GM12878 (cell line): ENCODE measurements at regions of chr17 and their contacts with region 1.

Region 1: DNA sequence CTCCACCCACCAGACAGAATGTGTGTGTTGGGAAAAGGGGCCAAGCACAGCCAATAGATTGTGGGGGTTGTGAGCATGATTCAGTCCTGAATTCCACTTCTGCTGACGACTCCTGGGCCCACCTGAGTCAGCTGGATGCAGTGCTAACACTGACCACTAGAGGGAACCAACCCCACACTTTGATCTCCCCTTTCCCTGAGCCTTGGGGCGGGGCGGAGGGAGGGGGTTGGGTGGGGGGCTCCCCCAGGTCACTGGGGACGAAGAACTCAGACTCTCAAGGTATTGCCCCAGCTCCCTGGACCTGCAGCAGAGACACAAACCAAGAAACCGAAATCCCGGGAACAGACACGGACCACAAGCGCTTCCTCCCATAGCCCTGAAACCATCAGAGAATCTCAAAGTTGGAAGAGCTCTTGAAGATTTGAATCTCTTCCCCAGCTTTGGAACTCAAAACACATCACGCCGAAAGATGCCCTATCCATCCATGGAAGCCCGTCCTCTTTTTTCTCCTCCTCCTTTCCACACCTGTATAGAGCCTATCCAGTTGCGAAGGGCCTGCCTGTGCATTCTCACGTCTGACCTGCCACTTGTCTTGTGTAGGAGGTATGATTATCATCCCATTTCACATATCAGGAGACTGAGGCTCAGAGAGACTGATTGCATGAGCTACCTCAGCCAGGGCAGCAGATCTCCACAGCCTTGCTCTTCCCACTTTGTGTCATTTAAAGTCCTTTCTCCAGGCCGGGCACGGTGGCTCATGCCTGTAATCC is 784 bp upstream of the CSHL1 start:
- DNase-seq: no peak
- ATAC-seq: peak; percentile 78
- H3K4me3 ChIP-seq: no peak overlapping the region
- H3K27ac ChIP-seq: no peak overlapping the region
- H3K4me1 ChIP-seq: peaks cover 5% of the 10 kb centered on the region
- H3K27me3 ChIP-seq: peaks cover 0 to 2% of the 10 kb centered on the region in 2 experiments; a peak in 2 of 4 replicates
- CTCF ChIP-seq: peak; percentile 58 to 79 (median 66)
- EP300 ChIP-seq: no peak
- POLR2A ChIP-seq: no peak
- RAD21 ChIP-seq: peak; percentile 68

Region 2: GRCh38 chr17:63699638-63700527 is 212.0 kb before region 1 on chr17 and contains the start of gene LIMD2:
- CTCF ChIA-PET with region 1: no interaction called
- POLR2A ChIA-PET with region 1: no interaction called
- RAD21 ChIA-PET with region 1: no interaction called
- SMC1A ChIA-PET with region 1: no interaction called
- in situ Hi-C with region 1: no loop called
- intact Hi-C with region 1: no loop called
- DNase-seq: no peak
- ATAC-seq: peak; percentile 7
- H3K4me3 ChIP-seq: peak within 1 kb of the TSS; percentile 91
- H3K27ac ChIP-seq: peak within 1 kb of the TSS; percentile 94
- H3K4me1 ChIP-seq: peaks cover 40% of the 10 kb centered on the region
- H3K27me3 ChIP-seq: no peaks in the 10 kb centered on the region
- CTCF ChIP-seq: no peak
- EP300 ChIP-seq: no peak
- POLR2A ChIP-seq: peak; percentile 88
- RAD21 ChIP-seq: no peak
- polyA plus RNA-seq, gene LIMD2: 1.1 to 5.0 TPM

Region 3: GRCh38 chr17:63984651-63985386 is 73.0 kb after region 1 on chr17:
- CTCF ChIA-PET with region 1: interaction called, 46 read pairs
- POLR2A ChIA-PET with region 1: no interaction called
- RAD21 ChIA-PET with region 1: interaction called, 4 read pairs
- SMC1A ChIA-PET with region 1: interaction called, 8 read pairs
- in situ Hi-C with region 1: no loop called
- intact Hi-C with region 1: no loop called
- DNase-seq: no peak
- ATAC-seq: peak; percentile 54
- H3K4me3 ChIP-seq: no peak overlapping the region
- H3K27ac ChIP-seq: no peak overlapping the region
- H3K4me1 ChIP-seq: no peaks in the 10 kb centered on the region
- H3K27me3 ChIP-seq: no peaks in the 10 kb centered on the region
- CTCF ChIP-seq: no peak
- EP300 ChIP-seq: no peak
- POLR2A ChIP-seq: no peak
- RAD21 ChIP-seq: no peak

Region 4: GRCh38 chr17:63993368-63993985 is 81.6 kb after region 1 on chr17:
- CTCF ChIA-PET with region 1: interaction called, 46 read pairs
- POLR2A ChIA-PET with region 1: no interaction called
- RAD21 ChIA-PET with region 1: interaction called, 4 read pairs
- SMC1A ChIA-PET with region 1: interaction called, 8 read pairs
- in situ Hi-C with region 1: no loop called
- intact Hi-C with region 1: no loop called
- DNase-seq: no peak
- ATAC-seq: no peak
- H3K4me3 ChIP-seq: no peak overlapping the region
- H3K27ac ChIP-seq: no peak overlapping the region
- H3K4me1 ChIP-seq: peaks cover 4% of the 10 kb centered on the region
- H3K27me3 ChIP-seq: peaks cover 3 to 7% of the 10 kb centered on the region in 2 experiments
- CTCF ChIP-seq: no peak
- EP300 ChIP-seq: no peak
- POLR2A ChIP-seq: no peak
- RAD21 ChIP-seq: no peak